ENCODE measurements at regions of chrX and their contacts with region 1.

Region 1: GRCh38 chrX:33204889-33205288 is 6.5 kb downstream of the DMD start:
- DNase-seq: peak; percentile 60 to 76
- ATAC-seq: peak; percentile 89 to 94
- H3K4me3 ChIP-seq: peak overlapping the region; percentile 51 to 61 (median 55)
- H3K27ac ChIP-seq: peak overlapping the region; percentile 78 to 91 (median 84)
- H3K4me1 ChIP-seq: no peaks in the 10 kb centered on the region
- H3K27me3 ChIP-seq: no peaks in the 10 kb centered on the region
- CTCF ChIP-seq: no peak
- POLR2A ChIP-seq: no peak

Region 2: DNA sequence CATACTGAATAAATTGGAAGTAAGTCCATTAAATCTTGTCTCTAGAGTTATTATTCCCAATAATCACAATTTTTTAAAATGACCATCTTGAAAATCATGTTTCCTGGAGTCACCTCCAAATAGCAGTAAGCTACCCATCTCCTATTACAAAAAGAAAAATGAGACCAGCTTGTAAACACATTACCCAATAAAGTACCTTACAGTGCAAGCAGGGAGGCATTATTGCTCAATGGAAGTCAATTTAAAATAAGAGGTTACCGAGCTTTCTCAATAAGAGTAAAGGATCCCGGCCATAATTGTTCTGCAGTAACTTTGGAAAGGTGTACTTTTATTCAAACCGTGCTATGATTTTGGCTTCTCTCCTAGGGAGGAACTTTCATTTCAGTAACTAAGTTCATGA is 71.6 kb before region 1 on chrX:
- in situ Hi-C with region 1: no loop called
- intact Hi-C with region 1: loop called (anchors 5 kb)
- DNase-seq: no peak
- ATAC-seq: peak; percentile 86 to 94
- H3K4me3 ChIP-seq: peak overlapping the region in 3 of 4 donors; percentile 2 to 18 (median 16)
- H3K27ac ChIP-seq: peak overlapping the region; percentile 65 to 83 (median 73)
- H3K4me1 ChIP-seq: peaks cover 5 to 14% of the 10 kb centered on the region in 2 donors
- H3K27me3 ChIP-seq: no peaks in the 10 kb centered on the region
- CTCF ChIP-seq: no peak
- POLR2A ChIP-seq: no peak

Region 3: DNA sequence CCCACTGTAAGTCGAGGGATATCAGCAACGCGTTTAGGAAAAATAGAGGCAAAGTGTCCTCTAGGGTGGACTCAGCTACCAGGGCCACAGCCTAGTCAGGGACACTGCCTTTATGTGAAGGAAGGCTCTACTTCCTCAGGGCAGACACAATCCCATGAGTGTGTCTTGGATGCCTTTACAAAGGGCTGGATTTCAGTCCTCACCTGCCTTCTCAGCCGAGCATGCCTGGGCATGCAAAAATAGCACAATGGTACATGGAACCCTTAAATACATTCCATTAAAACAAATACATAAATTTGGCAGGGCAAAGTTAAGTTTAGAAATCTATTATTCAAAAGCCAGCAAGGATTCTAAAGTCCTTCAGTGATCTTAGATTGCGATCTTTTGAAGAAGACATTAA is 44.6 kb before region 1 on chrX:
- in situ Hi-C with region 1: no loop called
- intact Hi-C with region 1: no loop called
- DNase-seq: no peak
- ATAC-seq: no peak
- H3K4me3 ChIP-seq: no peak overlapping the region
- H3K27ac ChIP-seq: peak overlapping the region in 2 of 4 donors; percentile 2 to 29
- H3K4me1 ChIP-seq: peaks cover 0 to 4% of the 10 kb centered on the region in 2 donors
- H3K27me3 ChIP-seq: no peaks in the 10 kb centered on the region
- CTCF ChIP-seq: no peak
- POLR2A ChIP-seq: no peak

Region 4: GRCh38 chrX:33324099-33324498 is 119.2 kb after region 1 on chrX:
- in situ Hi-C with region 1: no loop called
- intact Hi-C with region 1: no loop called
- DNase-seq: no peak
- ATAC-seq: no peak
- H3K4me3 ChIP-seq: no peak overlapping the region
- H3K27ac ChIP-seq: no peak overlapping the region
- H3K4me1 ChIP-seq: no peaks in the 10 kb centered on the region
- H3K27me3 ChIP-seq: no peaks in the 10 kb centered on the region
- CTCF ChIP-seq: peak in 1 of 5 experiments; percentile 21
- POLR2A ChIP-seq: no peak